IMR-90 (cell line): ENCODE measurements at regions of chr22 and their contacts with region 1.

Region 1: GRCh38 chr22:31148953-31149627 is 8.8 kb upstream of the PLA2G3 start:
- DNase-seq: peak; percentile 80
- ATAC-seq: peak; percentile 99
- H3K4me3 ChIP-seq: no peak overlapping the region
- H3K27ac ChIP-seq: peak overlapping the region; percentile 9; the same call in 1 of the 2 replicates
- H3K4me1 ChIP-seq: peaks cover 5% of the 10 kb centered on the region
- H3K27me3 ChIP-seq: no peaks in the 10 kb centered on the region
- CTCF ChIP-seq: peak; percentile 98
- POLR2A ChIP-seq: no peak
- RAD21 ChIP-seq: peak; percentile 97

Region 2: DNA sequence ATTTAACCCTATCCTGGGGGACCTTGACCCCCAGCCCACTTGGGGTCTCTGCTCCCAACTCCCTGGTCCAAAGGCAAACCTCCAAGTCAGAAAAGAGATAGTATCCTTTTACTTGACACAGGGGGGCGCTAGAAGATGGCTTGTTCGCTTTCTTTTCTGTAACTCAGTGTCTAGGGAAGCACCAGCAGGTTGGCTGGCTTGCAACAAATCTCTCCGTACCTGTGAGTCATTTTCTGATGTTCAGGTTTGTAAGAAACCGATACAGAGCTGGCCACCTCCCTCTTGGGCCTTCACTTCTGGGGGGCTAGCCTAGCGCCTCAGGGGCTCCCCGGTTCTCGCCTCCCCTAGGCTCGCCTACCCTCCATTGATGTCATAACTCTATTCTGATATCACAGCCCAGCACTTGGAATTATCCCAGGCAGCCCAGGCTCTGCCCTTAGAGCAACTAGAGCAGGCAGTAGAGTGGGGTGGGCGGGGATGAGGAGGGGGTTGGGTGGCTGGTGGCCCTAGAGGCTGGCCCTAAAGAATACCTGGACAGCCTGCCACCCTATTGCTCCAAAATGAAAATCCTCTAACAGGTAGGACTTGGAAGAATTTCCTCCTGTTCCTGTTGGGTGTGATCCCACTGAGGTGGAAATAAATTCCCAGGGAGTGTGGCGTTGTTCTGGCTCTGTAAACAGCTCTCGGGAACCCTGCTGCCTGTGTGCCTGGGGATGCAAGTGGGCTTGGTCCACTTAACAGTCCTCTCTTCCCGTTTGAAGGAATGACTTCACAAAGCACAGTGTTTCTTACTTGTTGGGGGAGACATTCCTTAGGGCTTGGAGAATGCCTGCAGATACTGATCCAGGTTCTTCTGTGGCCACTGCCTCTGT is 385.0 kb before region 1 on chr22:
- CTCF ChIA-PET with region 1: interaction called, 7 read pairs
- POLR2A ChIA-PET with region 1: no interaction called
- dilution Hi-C with region 1: no loop called
- in situ Hi-C with region 1: no loop called
- intact Hi-C with region 1: loop called (anchors 5 kb)
- DNase-seq: peak; percentile 86
- ATAC-seq: peak; percentile 84
- H3K4me3 ChIP-seq: no peak overlapping the region
- H3K27ac ChIP-seq: no peak overlapping the region
- H3K4me1 ChIP-seq: no peaks in the 10 kb centered on the region
- H3K27me3 ChIP-seq: no peaks in the 10 kb centered on the region
- CTCF ChIP-seq: peak; percentile 90
- POLR2A ChIP-seq: no peak
- RAD21 ChIP-seq: peak; percentile 96

Region 3: DNA sequence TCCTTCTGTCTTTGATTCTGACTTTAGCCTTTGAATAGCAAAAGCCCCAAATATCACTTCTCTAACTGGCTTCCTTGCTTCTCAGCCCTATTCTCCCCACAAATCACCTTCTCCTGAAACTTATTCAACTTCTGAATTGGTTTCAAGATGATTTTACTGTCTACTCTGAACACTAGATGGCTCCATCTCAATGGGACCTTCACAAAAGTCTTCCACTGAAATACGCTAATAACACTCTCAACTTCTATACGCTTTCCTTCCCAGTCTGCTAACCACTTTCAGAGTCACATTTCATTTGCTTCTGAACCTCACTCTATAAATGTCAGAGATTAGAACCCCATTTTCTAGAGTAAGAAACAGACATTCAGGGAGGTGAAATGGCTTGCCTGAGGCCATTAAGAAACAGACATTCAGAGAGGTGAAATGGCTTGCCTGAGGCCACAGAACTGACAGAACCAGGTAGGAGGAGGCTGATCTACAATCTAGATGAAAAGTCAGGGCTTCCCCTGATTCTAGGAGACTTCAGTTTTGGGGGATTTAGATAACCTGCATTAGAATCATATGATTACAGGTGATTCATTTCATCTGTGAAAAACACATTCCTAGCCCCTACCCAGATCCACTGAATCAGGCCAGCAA is 201.2 kb before region 1 on chr22:
- CTCF ChIA-PET with region 1: no interaction called
- POLR2A ChIA-PET with region 1: no interaction called
- dilution Hi-C with region 1: no loop called
- in situ Hi-C with region 1: loop called (anchors 5 kb)
- intact Hi-C with region 1: loop called (anchors 1 kb)
- DNase-seq: peak; percentile 70
- ATAC-seq: peak; percentile 67
- H3K4me3 ChIP-seq: no peak overlapping the region
- H3K27ac ChIP-seq: no peak overlapping the region
- H3K4me1 ChIP-seq: peaks cover 2% of the 10 kb centered on the region
- H3K27me3 ChIP-seq: no peaks in the 10 kb centered on the region
- CTCF ChIP-seq: peak; percentile 67
- POLR2A ChIP-seq: no peak
- RAD21 ChIP-seq: peak; percentile 73

Region 4: GRCh38 chr22:31089160-31090100 is 59.7 kb before region 1 on chr22:
- CTCF ChIA-PET with region 1: no interaction called
- POLR2A ChIA-PET with region 1: interaction called, 9 read pairs
- dilution Hi-C with region 1: no loop called
- in situ Hi-C with region 1: no loop called
- intact Hi-C with region 1: loop called (anchors 1 kb)
- DNase-seq: no peak
- ATAC-seq: peak; percentile 22
- H3K4me3 ChIP-seq: no peak overlapping the region
- H3K27ac ChIP-seq: no peak overlapping the region
- H3K4me1 ChIP-seq: peaks cover 5% of the 10 kb centered on the region
- H3K27me3 ChIP-seq: no peaks in the 10 kb centered on the region
- CTCF ChIP-seq: peak; percentile 79
- POLR2A ChIP-seq: no peak
- RAD21 ChIP-seq: peak; percentile 75

Region 5: DNA sequence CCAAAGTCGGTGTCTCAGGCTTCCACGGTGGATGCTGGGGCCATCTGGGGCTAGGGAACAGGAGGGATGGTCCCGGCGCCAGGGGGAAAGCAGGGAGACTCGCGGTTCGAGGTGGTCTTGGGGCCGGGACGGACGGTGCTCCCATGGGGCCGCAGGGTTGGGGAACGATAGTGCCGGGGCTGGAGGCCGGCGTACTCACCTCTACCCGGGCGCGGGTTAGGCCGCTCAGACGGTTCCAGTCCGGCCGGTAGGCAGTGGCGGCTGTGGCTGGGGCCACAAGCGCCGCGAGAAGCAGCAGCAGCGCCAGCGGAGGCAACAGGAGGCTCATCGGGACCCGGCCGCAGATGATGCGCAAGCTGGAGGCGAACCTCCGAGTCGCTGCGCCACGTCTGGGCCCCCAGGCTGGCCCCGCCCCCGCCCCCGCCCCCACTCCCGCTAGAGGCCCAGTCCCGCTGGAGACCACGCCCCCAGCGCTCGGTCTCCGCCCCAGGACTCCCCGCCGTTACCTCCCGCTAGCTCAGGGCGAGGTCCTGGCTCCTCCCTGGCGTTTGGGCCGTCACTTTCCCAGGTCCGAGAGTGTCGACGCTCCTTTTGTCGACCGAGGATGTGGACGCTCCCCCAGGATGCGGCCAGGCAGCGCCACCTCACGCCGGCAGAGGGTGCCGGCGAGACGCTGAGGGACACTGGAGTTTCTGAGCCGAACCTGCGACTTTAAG is 41.8 kb before region 1 on chr22 and contains the start of gene SELENOM:
- CTCF ChIA-PET with region 1: interaction called, 12 read pairs
- POLR2A ChIA-PET with region 1: interaction called, 3 read pairs
- dilution Hi-C with region 1: no loop called
- in situ Hi-C with region 1: loop called (anchors 5 kb)
- intact Hi-C with region 1: loop called (anchors 1 kb)
- DNase-seq: peak; percentile 98
- ATAC-seq: peak; percentile 88
- H3K4me3 ChIP-seq: peak within 1 kb of the TSS; percentile 90
- H3K27ac ChIP-seq: peak within 1 kb of the TSS; percentile 94
- H3K4me1 ChIP-seq: peaks cover 35% of the 10 kb centered on the region
- H3K27me3 ChIP-seq: no peaks in the 10 kb centered on the region
- CTCF ChIP-seq: peak; percentile 99
- POLR2A ChIP-seq: peak; percentile 95
- RAD21 ChIP-seq: peak; percentile 95
- total RNA-seq, gene SELENOM: 36.1 and 46.2 TPM in 2 replicates

Region 6: DNA sequence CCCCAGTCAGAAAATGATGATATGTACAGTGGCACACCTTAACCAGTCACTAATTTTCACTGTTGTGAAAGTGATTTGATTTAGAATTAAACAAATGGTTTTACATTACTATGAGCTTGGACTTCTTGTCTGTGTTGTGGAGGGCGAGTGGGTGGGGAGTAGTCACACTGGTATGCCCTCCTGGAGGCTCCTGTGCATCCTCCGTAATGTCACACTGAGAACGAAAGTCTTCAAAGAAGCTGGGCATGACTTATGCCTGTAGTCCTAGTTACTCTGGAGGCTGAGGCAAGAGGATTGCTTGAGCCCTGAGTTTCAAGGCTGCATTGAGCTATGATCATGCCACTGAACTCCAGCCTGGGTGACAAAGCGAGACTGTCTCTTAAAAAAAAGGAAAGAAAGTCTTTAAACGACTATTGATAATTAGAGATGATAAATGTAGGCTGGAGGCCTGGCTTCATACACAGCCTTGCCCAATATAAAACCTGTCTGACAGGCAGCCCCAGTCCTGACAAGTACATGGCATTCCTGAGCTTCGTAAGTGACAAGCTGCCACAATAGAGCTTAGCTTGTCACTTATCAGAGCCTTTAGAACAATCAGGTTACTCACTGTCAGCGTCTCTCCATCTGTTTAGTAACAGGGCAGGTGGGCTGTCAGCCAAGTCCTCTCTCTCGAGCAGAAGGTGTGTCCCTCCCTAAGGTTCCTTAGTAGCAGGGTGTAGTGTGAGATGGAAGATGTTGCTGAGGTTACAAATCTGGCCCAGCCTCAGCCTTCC is 58.0 kb after region 1 on chr22:
- CTCF ChIA-PET with region 1: no interaction called
- POLR2A ChIA-PET with region 1: no interaction called
- dilution Hi-C with region 1: no loop called
- in situ Hi-C with region 1: no loop called
- intact Hi-C with region 1: no loop called
- DNase-seq: no peak
- ATAC-seq: no peak
- H3K4me3 ChIP-seq: no peak overlapping the region
- H3K27ac ChIP-seq: no peak overlapping the region
- H3K4me1 ChIP-seq: no peaks in the 10 kb centered on the region
- H3K27me3 ChIP-seq: no peaks in the 10 kb centered on the region
- CTCF ChIP-seq: no peak
- POLR2A ChIP-seq: no peak
- RAD21 ChIP-seq: no peak